ENCODE measurements at regions of chr6 and their contacts with region 1.

Region 1: DNA sequence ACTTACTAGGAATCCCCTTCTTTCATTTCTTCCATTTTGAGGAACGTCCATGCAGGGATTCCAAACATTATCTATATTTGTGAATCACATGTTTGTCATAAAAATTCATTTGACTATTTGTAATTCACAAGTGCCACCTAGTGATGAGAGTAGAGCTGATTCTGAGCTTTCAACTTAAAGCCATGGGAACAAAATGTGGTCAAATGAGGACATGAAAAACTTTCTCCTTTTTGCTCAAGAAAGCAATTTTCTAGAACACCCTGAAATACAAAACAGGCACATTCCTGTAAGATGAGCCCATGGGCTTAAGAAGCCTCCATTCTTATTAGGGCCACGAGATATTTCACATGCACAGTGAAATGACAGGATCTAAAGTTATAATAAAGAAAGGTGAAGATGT is 12.3 kb downstream of the MAP3K7 start:
- DNase-seq: peak; percentile 29
- H3K4me3 ChIP-seq: no peak overlapping the region
- H3K27ac ChIP-seq: no peak overlapping the region
- H3K4me1 ChIP-seq: no peaks in the 10 kb centered on the region
- H3K27me3 ChIP-seq: no peaks in the 10 kb centered on the region
- CTCF ChIP-seq: peak; percentile 47

Region 2: GRCh38 chr6:90586836-90587638 is 12.4 kb after region 1 on chr6 and contains the start of gene MAP3K7:
- CTCF ChIA-PET with region 1: no interaction called
- POLR2A ChIA-PET with region 1: interaction called, 15 read pairs
- intact Hi-C with region 1: no loop called
- DNase-seq: peak; percentile 98
- H3K4me3 ChIP-seq: peak within 1 kb of the TSS; percentile 90
- H3K27ac ChIP-seq: peak within 1 kb of the TSS; percentile 93
- H3K4me1 ChIP-seq: peaks cover 24% of the 10 kb centered on the region
- H3K27me3 ChIP-seq: no peaks in the 10 kb centered on the region
- CTCF ChIP-seq: no peak
- total RNA-seq, gene MAP3K7: 34.3 and 35.6 TPM in 2 replicates

Region 3: GRCh38 chr6:91911945-91912344 is 1337.3 kb after region 1 on chr6:
- CTCF ChIA-PET with region 1: no interaction called
- POLR2A ChIA-PET with region 1: no interaction called
- intact Hi-C with region 1: no loop called
- DNase-seq: no peak
- H3K4me3 ChIP-seq: no peak overlapping the region
- H3K27ac ChIP-seq: no peak overlapping the region
- H3K4me1 ChIP-seq: no peaks in the 10 kb centered on the region
- H3K27me3 ChIP-seq: no peaks in the 10 kb centered on the region
- CTCF ChIP-seq: no peak

Measured in A673 (cell line).